ENCODE measurements at regions of chr10 and their contacts with region 1.

Region 1: GRCh38 chr10:38010119-38010903 is at the start of gene ZNF33A:
- DNase-seq: peak; percentile 79 to 95 (median 92)
- H3K4me3 ChIP-seq: peak within 1 kb of the TSS; percentile 40 to 93 (median 78)
- H3K27ac ChIP-seq: peak within 1 kb of the TSS; percentile 88 to 100 (median 98)
- H3K27me3 ChIP-seq: no peaks in the 10 kb centered on the region
- CTCF ChIP-seq: peak in 4 of 56 donors; percentile 1 to 36 (median 18)
- total RNA-seq, gene ZNF33A: 21.3 to 43.5 (median 32.5) TPM

Region 2: GRCh38 chr10:37831495-37832333 is 178.6 kb before region 1 on chr10:
- intact Hi-C with region 1: no loop called
- DNase-seq: no peak
- H3K4me3 ChIP-seq: no peak overlapping the region
- H3K27ac ChIP-seq: no peak overlapping the region
- H3K27me3 ChIP-seq: no peaks in the 10 kb centered on the region
- CTCF ChIP-seq: no peak

Region 3: DNA sequence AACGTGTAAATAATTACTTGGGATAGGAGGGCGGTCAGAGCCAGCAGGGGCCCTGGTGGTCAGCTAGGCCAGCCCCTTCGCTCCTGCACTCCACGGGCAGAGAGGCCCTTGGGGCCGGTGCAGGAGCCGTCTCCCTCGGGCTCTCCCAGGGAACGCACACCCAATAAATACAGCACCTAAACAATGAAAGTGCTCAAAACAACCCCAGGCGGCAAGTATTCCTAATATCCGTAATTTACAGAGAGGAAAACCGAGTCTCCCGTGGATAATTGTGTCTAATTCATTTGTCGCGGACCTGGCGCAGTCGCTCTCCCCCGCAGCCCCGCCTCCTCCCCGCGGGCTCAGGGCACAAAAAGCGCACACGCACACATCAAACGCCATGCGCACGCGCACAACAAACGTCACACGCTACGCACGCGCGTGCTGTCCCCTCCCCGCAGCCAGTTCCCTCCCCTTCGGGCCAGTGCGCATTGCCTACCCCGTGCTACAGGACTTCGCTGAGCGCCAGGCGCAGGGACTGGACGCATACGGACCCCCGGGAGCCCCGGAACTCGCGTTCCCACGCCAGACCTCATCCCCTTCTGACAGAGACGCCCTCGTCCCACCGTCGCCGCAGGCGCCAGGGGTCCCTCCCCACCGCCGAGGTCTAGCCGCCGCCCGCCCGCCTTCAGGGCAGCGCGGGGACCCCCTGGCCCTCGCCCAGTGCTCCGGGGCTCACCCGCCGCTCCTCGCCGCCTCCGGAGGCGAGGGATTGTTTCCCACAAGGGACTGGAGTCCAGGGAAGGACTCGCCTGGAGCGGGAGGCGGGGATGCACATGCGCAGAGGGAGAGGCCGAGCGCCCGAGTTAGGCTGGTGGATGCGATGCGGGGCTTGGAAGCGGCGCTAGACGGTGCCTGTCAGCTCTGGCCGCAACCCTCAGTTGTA is 152.8 kb before region 1 on chr10 and contains the start of gene ZNF248:
- intact Hi-C with region 1: loop called (anchors 2 to 10 kb)
- DNase-seq: peak; percentile 92 to 97 (median 96)
- H3K4me3 ChIP-seq: peak within 1 kb of the TSS; percentile 67 to 100 (median 93)
- H3K27ac ChIP-seq: peak within 1 kb of the TSS; percentile 97 to 100 (median 100)
- H3K27me3 ChIP-seq: no peaks in the 10 kb centered on the region
- CTCF ChIP-seq: peak in 25 of 56 donors; percentile 2 to 40 (median 17)
- total RNA-seq, gene ZNF248: 30.3 to 61.8 (median 43.0) TPM

Region 4: DNA sequence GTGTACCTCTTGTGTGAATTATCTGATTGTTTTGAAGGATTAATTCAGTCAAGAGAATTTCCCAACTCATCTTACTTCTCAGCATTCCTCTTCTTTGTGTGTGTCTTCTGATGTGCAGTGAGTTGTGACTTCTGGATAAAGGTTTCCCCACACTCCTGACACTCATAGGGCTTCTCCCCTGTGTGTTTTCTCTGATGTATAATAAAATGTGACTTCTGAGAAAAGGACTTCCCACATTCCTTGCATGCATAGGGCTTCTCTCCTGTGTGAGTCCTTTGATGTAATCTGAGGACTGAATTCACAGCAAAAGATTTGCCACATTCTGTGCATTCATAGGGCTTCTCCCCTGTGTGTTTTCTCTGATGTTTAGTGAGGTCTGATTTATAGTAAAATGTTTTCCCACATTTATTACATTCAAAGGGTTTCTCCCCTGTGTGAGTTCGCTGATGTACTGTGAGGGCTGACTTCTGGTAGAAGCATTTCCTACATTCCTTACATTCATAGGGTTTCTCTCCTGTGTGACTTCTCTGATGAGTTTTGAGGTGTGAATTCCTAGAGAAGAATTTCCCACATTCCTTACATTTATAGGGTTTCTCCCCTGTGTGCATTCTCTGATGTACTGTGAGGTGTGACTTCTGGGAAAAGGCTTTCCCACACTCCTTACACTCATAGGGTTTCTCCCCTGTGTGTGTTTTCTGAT is 58.1 kb before region 1 on chr10:
- intact Hi-C with region 1: no loop called
- DNase-seq: no peak
- H3K4me3 ChIP-seq: no peak overlapping the region
- H3K27ac ChIP-seq: no peak overlapping the region
- H3K27me3 ChIP-seq: no peaks in the 10 kb centered on the region
- CTCF ChIP-seq: no peak

Region 5: GRCh38 chr10:37976091-37976879 is 34.0 kb before region 1 on chr10 and contains the start of gene ZNF25:
- intact Hi-C with region 1: loop called (anchors 1 kb)
- DNase-seq: peak; percentile 95 to 99 (median 98)
- H3K4me3 ChIP-seq: peak within 1 kb of the TSS; percentile 57 to 99 (median 90)
- H3K27ac ChIP-seq: peak within 1 kb of the TSS; percentile 88 to 100 (median 98)
- H3K27me3 ChIP-seq: no peaks in the 10 kb centered on the region
- CTCF ChIP-seq: peak; percentile 61 to 95 (median 84)
- total RNA-seq, gene ZNF25: 32.1 to 95.5 (median 61.2) TPM

Region 6: GRCh38 chr10:38094158-38094920 is 84.0 kb after region 1 on chr10 and contains the start of gene ZNF37A:
- intact Hi-C with region 1: loop called (anchors 1 to 2 kb)
- DNase-seq: peak; percentile 91 to 98 (median 94)
- H3K4me3 ChIP-seq: peak within 1 kb of the TSS; percentile 60 to 99 (median 92)
- H3K27ac ChIP-seq: peak within 1 kb of the TSS; percentile 13 to 96 (median 87)
- H3K27me3 ChIP-seq: no peaks in the 10 kb centered on the region
- CTCF ChIP-seq: peak in 39 of 56 donors; percentile 2 to 62 (median 37)
- total RNA-seq, gene ZNF37A: 24.5 to 48.8 (median 36.0) TPM

Measured in dorsolateral prefrontal cortex (tissue), 120 donors.